Ascending aorta (tissue), 2 donors: ENCODE measurements at regions of chr14 and their contacts with region 1.

Region 1: DNA sequence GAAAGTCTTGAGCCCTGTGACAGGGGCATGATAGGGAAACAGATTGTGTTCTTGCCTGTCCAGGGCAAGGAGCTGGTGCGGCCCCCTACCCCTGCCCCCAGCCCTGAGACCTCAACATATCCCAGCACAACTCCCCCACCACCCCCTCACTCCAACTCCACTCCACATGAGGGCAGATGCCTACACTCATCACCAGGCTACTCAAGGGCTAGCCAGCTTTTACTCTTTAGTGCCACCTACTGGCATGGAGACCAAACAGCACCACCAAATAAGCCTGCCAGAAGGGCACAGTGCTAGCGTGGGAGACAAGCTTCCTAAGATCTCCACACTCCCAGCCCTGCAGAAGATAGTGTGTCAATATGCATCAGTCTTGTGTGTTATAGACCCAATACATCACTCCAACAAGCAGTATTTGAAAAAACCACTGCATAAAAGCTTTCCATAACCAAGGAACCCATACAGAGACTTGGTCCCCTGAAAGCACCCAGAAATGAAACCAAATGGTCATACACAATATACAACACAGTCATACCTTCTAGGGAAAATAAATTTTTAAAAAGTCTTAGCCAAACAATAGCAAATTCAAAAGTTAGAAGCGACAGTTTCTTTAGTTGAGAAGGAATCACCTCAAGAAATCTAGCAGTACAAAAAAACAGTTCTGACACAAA is 154.4 kb downstream of the KCNK10 start:
- DNase-seq: no peak
- H3K4me3 ChIP-seq: no peak overlapping the region
- H3K27ac ChIP-seq: no peak overlapping the region
- H3K4me1 ChIP-seq: no peaks in the 10 kb centered on the region
- H3K27me3 ChIP-seq: no peaks in the 10 kb centered on the region
- CTCF ChIP-seq: peak; percentile 24 to 62 (median 26)

Region 2: DNA sequence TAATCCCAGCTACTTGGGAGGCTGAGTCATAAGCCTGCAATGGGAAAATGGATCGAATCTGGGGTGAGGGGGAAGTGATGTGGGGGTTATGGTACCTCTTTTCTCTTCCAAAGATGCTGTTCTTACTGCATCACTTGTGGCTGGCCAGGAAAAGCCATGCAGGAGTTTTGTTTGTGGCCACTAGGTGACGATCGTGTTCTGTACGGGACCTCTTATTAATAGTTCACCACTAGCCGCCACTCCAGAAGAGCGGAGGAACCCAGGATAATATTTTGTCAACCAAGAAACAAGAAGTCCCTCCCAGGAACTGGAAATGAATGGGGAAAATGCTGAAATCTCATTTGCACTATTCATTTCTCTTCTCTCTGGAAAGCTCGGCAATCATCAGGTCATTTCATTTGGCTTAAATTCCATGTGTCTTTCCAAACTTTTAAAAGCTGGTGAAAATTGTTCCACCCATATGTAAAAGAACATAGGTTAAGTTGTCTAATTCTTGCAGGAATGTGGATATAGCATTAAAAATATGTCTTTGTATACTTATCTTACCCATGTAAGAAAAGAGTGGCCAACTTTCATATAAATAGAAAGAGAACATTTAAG is 154.8 kb before region 1 on chr14:
- intact Hi-C with region 1: loop called (anchors 5 kb)
- DNase-seq: peak; percentile 25 to 85
- H3K4me3 ChIP-seq: no peak overlapping the region
- H3K27ac ChIP-seq: no peak overlapping the region
- H3K4me1 ChIP-seq: no peaks in the 10 kb centered on the region
- H3K27me3 ChIP-seq: no peaks in the 10 kb centered on the region
- CTCF ChIP-seq: peak; percentile 67 to 89 (median 76)

Region 3: GRCh38 chr14:88967294-88967693 is 798.7 kb after region 1 on chr14:
- intact Hi-C with region 1: no loop called
- DNase-seq: no peak
- H3K4me3 ChIP-seq: no peak overlapping the region
- H3K27ac ChIP-seq: no peak overlapping the region
- H3K4me1 ChIP-seq: no peaks in the 10 kb centered on the region
- H3K27me3 ChIP-seq: no peaks in the 10 kb centered on the region
- CTCF ChIP-seq: no peak